ENCODE measurements at regions of chr7 and their contacts with region 1.

Region 1: GRCh38 chr7:152436111-152436930 is 518 bp upstream of the KMT2C start:
- DNase-seq: peak; percentile 94
- H3K4me3 Mint-ChIP-seq: peak overlapping the region; percentile 85
- H3K27ac Mint-ChIP-seq: peak overlapping the region; percentile 70
- H3K4me1 Mint-ChIP-seq: peaks cover 16% of the 10 kb centered on the region
- H3K27me3 Mint-ChIP-seq: no peaks in the 10 kb centered on the region
- CTCF ChIP-seq: no peak

Region 2: GRCh38 chr7:152675759-152676636 is 239.7 kb after region 1 on chr7 and contains the start of gene XRCC2:
- CTCF ChIA-PET with region 1: no interaction called
- intact Hi-C with region 1: loop called (anchors 10 kb)
- DNase-seq: peak; percentile 94
- H3K4me3 Mint-ChIP-seq: peak within 1 kb of the TSS; percentile 97
- H3K27ac Mint-ChIP-seq: peak within 1 kb of the TSS; percentile 91
- H3K4me1 Mint-ChIP-seq: peaks cover 9% of the 10 kb centered on the region
- H3K27me3 Mint-ChIP-seq: no peaks in the 10 kb centered on the region
- CTCF ChIP-seq: no peak
- total RNA-seq, gene XRCC2: 22.1 and 23.1 TPM in 2 replicates